Activated T-helper 2 cell treated with anti-CD3 and anti-CD28 coated beads, Interferon-gamma antibody, Interleukin-2, Interleukin-4, amounts not matched to agents 10 μg/mL and 5 μg/mL and 100 μg/mL, durations not matched to agents 14 hours and 24 hours and 36 hours (primary cell): ENCODE measurements at regions of chr9 and their contacts with region 1.

Region 1: DNA sequence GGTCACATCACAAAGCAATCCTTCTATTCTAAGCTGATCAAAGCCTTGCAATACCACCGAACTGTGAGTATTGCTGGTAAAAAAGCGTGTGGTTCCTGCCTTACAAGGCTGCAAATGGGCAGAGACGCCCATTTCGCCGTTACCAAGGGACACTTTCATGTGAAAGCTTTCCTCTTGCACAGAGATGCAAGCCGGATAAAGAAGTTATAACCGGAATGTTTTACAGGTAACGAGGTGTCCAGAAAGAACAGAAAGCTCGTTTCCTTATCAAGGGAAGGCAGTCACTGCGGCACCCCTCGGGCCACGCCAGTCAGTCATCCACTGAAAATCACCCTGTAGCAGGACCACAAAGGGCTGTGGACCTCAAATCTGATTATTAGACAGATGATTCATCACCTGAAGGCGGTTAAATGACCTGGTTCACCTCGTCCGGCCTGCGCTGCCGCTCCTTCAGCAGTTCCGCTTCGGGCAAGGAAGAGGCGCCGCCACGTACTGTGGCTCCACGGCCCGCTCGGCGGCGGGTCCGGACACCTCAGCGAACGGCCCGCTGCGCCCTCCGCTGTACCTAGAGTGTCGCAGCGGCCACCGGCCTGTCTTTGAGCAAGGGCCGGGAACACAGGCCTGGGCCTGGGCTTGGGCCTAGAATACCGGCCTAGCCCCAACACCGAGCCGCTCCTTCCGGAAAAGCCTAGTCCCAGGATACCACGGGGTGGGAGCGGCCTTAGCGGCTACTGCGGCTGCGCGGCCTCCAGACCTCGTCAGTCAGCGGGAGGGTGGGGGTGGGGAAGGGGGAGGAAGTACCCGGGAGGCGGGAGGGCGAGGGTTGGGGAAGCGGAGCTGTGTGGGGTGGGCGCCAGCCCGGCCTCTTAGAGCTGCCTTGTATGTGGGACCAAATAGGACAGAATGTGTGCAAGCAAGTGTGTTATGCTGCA is at the start of gene KLHL9:
- DNase-seq: peak; percentile 81
- H3K4me3 Mint-ChIP-seq: peak within 1 kb of the TSS; percentile 88
- H3K27ac Mint-ChIP-seq: peak within 1 kb of the TSS; percentile 83
- H3K4me1 Mint-ChIP-seq: peaks cover 36% of the 10 kb centered on the region
- H3K27me3 Mint-ChIP-seq: peaks cover 5% of the 10 kb centered on the region
- total RNA-seq, gene KLHL9: 14.3 and 15.8 TPM in 2 replicates

Region 2: DNA sequence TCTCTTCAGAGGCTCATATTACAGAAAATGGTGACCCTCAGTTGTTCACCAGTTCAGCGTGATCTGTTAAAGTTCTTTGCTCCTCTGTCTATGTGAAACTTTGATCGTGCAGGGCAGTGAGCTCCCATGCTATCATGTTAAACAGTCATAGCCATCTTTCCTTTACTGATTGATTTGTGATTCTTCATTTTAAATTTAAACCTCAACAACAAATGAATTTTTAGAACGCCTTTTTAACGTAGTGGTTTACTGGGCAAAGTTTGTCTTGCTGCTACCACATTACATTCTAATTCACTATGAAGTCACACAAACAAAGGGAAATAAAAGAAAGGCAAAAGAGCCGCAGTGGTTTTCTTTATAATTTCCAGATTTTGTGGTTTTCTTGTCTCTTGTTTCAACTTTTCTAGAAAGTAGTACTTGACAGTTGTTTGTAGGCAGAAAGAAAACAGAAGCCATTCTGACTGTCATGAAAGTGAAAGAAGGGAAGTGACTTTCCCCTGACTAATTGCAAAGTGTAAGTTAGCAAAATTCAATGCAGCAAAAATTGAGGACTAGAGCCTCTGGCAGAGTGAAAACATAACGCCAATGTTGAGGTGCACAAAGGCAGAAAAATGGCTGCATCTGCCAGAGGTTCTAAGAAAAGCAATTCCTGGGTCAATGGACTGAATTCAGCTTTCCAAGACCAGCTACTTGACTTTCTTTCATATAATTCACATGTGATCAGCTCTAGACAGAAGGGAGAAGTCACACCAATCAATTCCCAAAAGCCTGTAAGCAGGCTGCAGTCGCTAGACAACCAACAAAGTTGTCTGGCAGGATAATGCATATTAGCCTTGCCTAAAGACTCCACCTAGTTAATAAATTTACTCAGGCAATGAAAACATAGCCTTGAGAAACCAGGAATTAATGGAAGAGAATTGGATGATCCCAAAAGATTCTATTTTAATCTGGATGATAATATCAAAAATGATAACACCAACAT is 22.8 kb after region 1 on chr9:
- intact Hi-C with region 1: loop called (anchors 1 kb)
- DNase-seq: no peak
- H3K4me3 Mint-ChIP-seq: peak overlapping the region; percentile 56
- H3K27ac Mint-ChIP-seq: peak overlapping the region; percentile 81
- H3K4me1 Mint-ChIP-seq: peaks cover 23% of the 10 kb centered on the region
- H3K27me3 Mint-ChIP-seq: peaks cover 9% of the 10 kb centered on the region

Region 3: DNA sequence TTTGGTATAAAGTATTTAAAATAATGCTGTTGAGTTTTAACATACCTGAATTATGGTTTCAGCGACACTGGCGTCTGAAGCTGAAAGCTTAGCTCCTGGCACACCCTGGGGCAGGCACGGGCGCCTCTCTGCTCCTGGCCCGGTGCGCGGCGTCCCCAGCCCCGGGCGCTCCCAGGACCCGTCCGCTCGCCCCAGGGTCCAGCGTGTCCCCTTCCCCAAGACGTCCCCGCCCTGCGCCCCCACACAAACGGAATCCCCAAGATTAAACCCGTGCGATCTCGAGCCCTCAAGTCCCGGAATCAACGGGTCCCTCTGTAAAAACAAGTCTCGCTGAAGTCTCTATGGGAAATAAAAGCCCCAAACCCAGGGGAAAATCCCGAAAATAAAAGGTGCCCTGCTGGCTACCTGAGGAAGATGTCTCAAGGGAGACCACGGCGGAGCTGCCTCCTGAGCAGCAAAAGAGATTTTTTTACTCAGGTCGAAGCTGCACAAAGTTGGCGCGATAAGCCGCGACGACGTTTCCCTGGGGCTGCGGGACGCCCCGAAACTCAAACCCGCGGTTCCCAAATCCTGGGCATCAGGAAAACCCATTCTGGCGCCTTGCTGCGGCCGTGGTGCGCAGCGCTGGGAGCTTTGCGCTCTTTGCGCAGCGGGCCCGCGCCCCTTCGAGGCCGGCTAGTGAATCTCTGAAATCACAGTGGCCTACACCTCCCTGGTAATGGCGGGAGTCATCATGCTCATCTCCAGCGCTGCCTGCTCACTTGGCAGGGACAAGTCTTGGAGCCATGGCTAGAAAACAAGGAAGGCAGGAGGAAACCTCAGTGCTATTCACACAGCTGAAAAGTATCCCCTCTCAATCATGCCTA is 67.7 kb after region 1 on chr9:
- intact Hi-C with region 1: no loop called
- DNase-seq: no peak
- H3K4me3 Mint-ChIP-seq: peak overlapping the region; percentile 54
- H3K27ac Mint-ChIP-seq: no peak overlapping the region
- H3K4me1 Mint-ChIP-seq: peaks cover 12% of the 10 kb centered on the region
- H3K27me3 Mint-ChIP-seq: peaks cover 69% of the 10 kb centered on the region

Region 4: GRCh38 chr9:21653091-21653490 is 318.1 kb after region 1 on chr9:
- intact Hi-C with region 1: no loop called
- DNase-seq: no peak
- H3K4me3 Mint-ChIP-seq: no peak overlapping the region
- H3K27ac Mint-ChIP-seq: no peak overlapping the region
- H3K4me1 Mint-ChIP-seq: no peaks in the 10 kb centered on the region
- H3K27me3 Mint-ChIP-seq: peaks cover 10% of the 10 kb centered on the region